ENCODE measurements at regions of chr17 and their contacts with region 1.

Region 1: DNA sequence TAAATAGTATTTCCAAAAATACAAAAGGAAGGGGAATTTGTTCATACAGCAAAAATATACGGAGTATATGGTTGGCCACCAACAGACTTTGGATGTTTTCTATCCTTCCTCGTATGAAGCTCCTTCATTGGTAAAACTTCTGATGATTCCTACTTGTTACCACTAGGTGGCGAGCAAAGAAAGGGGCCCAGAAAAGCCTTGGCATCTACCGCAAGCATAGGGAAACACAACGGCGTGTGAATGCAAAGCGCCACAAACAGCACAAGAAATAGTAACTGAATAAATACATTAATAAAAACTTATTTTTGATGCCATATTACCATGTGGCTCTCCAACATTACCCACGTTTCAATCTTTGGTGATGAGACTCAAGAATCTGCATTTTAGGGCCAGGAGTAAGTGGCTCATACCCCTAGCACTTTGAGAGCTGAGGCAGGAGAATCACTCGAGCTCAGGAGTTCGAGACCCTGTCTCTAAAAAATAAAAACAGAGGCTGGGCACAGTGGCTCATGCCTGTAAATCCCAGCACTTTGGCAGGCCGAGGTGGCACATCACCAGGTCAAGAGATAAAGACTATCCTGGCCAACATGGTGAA is 34.5 kb downstream of the YWHAE start:
- DNase-seq: peak; percentile 41 to 47
- ATAC-seq: peak; percentile 86

Region 2: GRCh38 chr17:1455797-1456599 is 90.5 kb after region 1 on chr17 and contains the start of gene CRK:
- intact Hi-C with region 1: loop called in 1 of 2 experiments (anchors 10 kb)
- DNase-seq: peak; percentile 93 to 97
- ATAC-seq: peak; percentile 81
- total RNA-seq, gene CRK: 74.6 to 80.9 TPM

Measured in left colon (tissue), 2 donors.